SK-N-SH (cell line): ENCODE measurements at regions of chr10 and their contacts with region 1.

Region 1: DNA sequence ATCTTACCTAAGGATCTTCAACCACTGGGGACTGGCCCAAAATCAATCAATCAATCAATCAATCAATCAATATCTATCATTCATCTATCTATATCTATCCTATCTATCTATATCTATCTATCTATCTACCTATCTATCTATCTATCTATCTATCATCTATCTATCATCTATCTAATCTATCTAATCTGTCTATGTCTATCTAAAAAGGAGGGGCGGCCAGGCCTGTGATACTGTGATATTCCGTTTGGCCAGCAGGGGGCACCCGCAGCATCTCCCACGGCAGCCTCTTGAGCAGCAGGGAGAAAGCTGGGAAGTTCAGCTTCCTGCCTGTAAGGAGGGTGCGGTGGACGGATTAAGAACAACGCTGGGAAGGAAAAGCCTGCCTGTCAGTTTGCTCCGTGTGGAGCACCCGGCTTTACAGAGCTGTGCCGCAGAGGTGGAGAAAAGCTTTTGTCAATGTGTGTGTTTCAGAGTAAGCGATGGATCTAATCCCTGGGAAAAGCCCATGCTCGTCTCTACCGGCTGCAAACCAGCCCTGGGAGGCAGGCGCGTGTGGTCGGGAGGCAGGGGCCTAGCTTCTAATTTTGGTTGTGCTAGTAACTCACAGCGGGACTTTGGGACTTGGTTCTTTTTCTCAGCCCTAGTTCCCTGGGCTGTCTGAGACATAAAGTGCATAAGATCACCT is 125.0 kb downstream of the SH2D4B start:
- DNase-seq: peak; percentile 77
- H3K4me3 ChIP-seq: peak overlapping the region; percentile 24 to 46; a peak in 3 of 4 replicates
- H3K27ac ChIP-seq: no peak overlapping the region
- H3K4me1 ChIP-seq: peaks cover 0 to 2% of the 10 kb centered on the region in 2 experiments; a peak in 1 of 4 replicates
- H3K27me3 ChIP-seq: no peaks in the 10 kb centered on the region
- CTCF ChIP-seq: peak; percentile 88
- EP300 ChIP-seq: no peak
- RAD21 ChIP-seq: peak; percentile 70

Region 2: GRCh38 chr10:80504158-80504811 is 158.4 kb before region 1 on chr10:
- CTCF ChIA-PET with region 1: interaction called, 15 read pairs
- POLR2A ChIA-PET with region 1: no interaction called
- DNase-seq: peak; percentile 75
- H3K4me3 ChIP-seq: no peak overlapping the region
- H3K27ac ChIP-seq: peak overlapping the region in 1 of 2 experiments; percentile 92; a peak in 2 of 4 replicates
- H3K4me1 ChIP-seq: peaks cover 21 to 69% of the 10 kb centered on the region in 2 experiments; a peak in 3 of 4 replicates
- H3K27me3 ChIP-seq: no peaks in the 10 kb centered on the region
- CTCF ChIP-seq: no peak
- EP300 ChIP-seq: no peak
- RAD21 ChIP-seq: peak; percentile 15; the same call in 1 of the 2 replicates

Region 3: GRCh38 chr10:80552151-80552646 is 110.5 kb before region 1 on chr10:
- CTCF ChIA-PET with region 1: no interaction called
- POLR2A ChIA-PET with region 1: no interaction called
- DNase-seq: no peak
- H3K4me3 ChIP-seq: no peak overlapping the region
- H3K27ac ChIP-seq: no peak overlapping the region
- H3K4me1 ChIP-seq: no peaks in the 10 kb centered on the region
- H3K27me3 ChIP-seq: no peaks in the 10 kb centered on the region
- CTCF ChIP-seq: no peak
- EP300 ChIP-seq: no peak
- RAD21 ChIP-seq: no peak

Region 4: GRCh38 chr10:80632742-80633141 is 30.0 kb before region 1 on chr10:
- CTCF ChIA-PET with region 1: interaction called, 19 read pairs
- POLR2A ChIA-PET with region 1: no interaction called
- DNase-seq: no peak
- H3K4me3 ChIP-seq: no peak overlapping the region
- H3K27ac ChIP-seq: no peak overlapping the region
- H3K4me1 ChIP-seq: peaks cover 0 to 3% of the 10 kb centered on the region in 2 experiments; a peak in 1 of 4 replicates
- H3K27me3 ChIP-seq: no peaks in the 10 kb centered on the region
- CTCF ChIP-seq: no peak
- EP300 ChIP-seq: no peak
- RAD21 ChIP-seq: no peak

Region 5: GRCh38 chr10:80699602-80700039 is 36.9 kb after region 1 on chr10:
- CTCF ChIA-PET with region 1: interaction called, 78 read pairs
- POLR2A ChIA-PET with region 1: no interaction called
- DNase-seq: peak; percentile 78
- H3K4me3 ChIP-seq: peak overlapping the region in 1 of 2 experiments; percentile 43; a peak in 1 of 4 replicates
- H3K27ac ChIP-seq: no peak overlapping the region
- H3K4me1 ChIP-seq: peaks cover 0 to 35% of the 10 kb centered on the region in 2 experiments; a peak in 1 of 4 replicates
- H3K27me3 ChIP-seq: no peaks in the 10 kb centered on the region
- CTCF ChIP-seq: peak; percentile 74
- EP300 ChIP-seq: no peak
- RAD21 ChIP-seq: peak; percentile 83

Region 6: GRCh38 chr10:80924063-80924952 is 261.6 kb after region 1 on chr10:
- CTCF ChIA-PET with region 1: interaction called, 185 read pairs
- POLR2A ChIA-PET with region 1: no interaction called
- DNase-seq: peak; percentile 15
- H3K4me3 ChIP-seq: peak overlapping the region in 1 of 2 experiments; percentile 24; a peak in 1 of 4 replicates
- H3K27ac ChIP-seq: no peak overlapping the region
- H3K4me1 ChIP-seq: no peaks in the 10 kb centered on the region
- H3K27me3 ChIP-seq: no peaks in the 10 kb centered on the region
- CTCF ChIP-seq: peak; percentile 67
- EP300 ChIP-seq: no peak
- RAD21 ChIP-seq: peak; percentile 65

Region 7: GRCh38 chr10:81179805-81180452 is 517.2 kb after region 1 on chr10:
- CTCF ChIA-PET with region 1: interaction called, 11 read pairs
- POLR2A ChIA-PET with region 1: no interaction called
- DNase-seq: peak; percentile 12
- H3K4me3 ChIP-seq: peak overlapping the region in 1 of 2 experiments; percentile 41; a peak in 1 of 4 replicates
- H3K27ac ChIP-seq: no peak overlapping the region
- H3K4me1 ChIP-seq: no peaks in the 10 kb centered on the region
- H3K27me3 ChIP-seq: no peaks in the 10 kb centered on the region
- CTCF ChIP-seq: peak; percentile 35
- EP300 ChIP-seq: no peak
- RAD21 ChIP-seq: peak; percentile 57